CD4-positive, alpha-beta memory T cell (primary cell): ENCODE measurements at regions of chr18 and their contacts with region 1.

Region 1: DNA sequence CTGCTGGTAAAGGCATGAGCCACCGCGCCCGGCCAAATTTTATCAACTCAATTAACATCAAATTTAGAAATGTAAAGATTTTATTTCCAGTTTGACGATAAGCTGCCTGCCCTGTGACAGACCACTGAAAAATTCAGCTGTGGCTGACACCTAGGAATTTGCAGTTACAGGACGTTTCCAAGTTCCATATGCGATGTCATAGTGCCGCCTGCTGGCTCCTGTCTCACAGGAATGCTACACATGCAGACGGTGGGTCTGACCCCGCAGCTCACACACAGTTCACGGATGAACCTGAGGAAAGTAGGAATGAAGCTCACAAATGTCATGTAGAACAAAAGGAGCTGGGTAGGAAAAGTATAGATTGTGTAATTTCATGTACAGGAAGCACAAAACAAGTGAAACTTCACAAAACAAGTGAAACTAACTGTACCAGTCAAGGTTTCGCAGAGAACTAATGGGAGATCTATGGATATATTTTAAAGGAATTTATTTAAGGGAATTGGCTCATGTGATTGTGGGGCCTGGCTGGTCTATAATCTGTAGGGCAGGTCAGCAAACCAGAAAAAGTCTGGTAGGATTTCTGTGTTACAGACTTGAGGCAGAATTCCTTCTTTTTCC is 13.2 kb upstream of the SEH1L start:
- DNase-seq: peak; percentile 71 to 76 (median 73)
- H3K4me3 ChIP-seq: no peak overlapping the region
- H3K4me3 Mint-ChIP-seq: peak overlapping the region in 2 of 8 donors; percentile 6 to 59
- H3K27ac ChIP-seq: no peak overlapping the region
- H3K27ac Mint-ChIP-seq: peak overlapping the region in 1 of 7 donors; percentile 32
- H3K4me1 ChIP-seq: peaks cover 5% of the 10 kb centered on the region
- H3K4me1 Mint-ChIP-seq: peaks cover 0 to 7% (median 4%) of the 10 kb centered on the region in 4 donors
- H3K27me3 ChIP-seq: no peaks in the 10 kb centered on the region
- H3K27me3 Mint-ChIP-seq: peaks cover 2 to 3% of the 10 kb centered on the region in 2 donors

Region 2: DNA sequence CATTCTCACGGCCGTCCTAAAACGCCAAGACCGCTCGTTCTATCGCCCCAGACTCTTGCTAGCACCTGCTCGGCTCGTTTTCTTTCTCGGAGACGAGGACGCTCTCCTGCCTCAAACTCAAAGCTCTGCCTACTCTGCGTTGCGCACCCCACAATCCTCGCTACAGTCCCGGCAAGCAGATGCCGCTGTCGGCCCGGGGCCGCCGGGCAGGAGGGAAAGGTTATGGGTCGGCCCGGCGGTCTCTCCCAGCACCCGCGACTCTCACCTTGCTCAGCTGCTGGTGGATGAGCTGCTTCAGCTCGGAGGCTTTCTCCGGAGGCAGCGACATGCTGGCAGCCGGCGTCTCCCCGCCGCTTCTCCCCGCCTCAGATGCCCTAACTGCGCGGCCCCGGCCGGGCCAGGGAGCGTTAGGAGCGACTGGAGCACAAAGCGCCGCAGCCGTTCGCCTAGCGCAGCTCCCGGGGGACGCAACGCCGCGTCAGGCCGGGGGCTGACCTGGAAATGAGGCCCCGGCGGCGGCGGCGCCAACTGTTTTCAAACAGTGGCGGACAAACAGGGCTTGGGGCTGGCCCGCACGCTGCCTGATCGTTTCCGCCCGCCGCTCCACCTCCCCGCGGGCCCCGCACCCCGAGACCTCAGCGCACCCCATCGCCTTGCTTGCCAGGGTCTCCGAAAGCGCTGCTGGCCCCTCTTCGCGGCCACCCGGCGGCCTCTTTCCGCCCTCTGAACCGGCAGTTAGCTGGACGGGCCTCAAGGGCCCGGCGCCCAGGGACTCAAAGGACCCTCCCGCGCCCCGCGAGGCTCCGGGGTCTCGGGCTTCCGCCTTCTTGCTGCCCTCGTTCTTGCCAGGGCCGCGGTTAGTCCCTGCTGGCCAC is 232.1 kb before region 1 on chr18 and contains the starts of genes CEP76 and PSMG2:
- CTCF ChIA-PET with region 1: interaction called, 12 read pairs
- POLR2A ChIA-PET with region 1: interaction called, 5 read pairs
- intact Hi-C with region 1: no loop called
- DNase-seq: peak; percentile 84 to 90 (median 87)
- H3K4me3 ChIP-seq: peak within 1 kb of the TSS; percentile 82 to 99
- H3K4me3 Mint-ChIP-seq: peak within 1 kb of the TSS; percentile 87 to 100 (median 98)
- H3K27ac ChIP-seq: peak within 1 kb of the TSS; percentile 93
- H3K27ac Mint-ChIP-seq: peak within 1 kb of the TSS; percentile 89 to 100 (median 96)
- H3K4me1 ChIP-seq: peaks cover 46% of the 10 kb centered on the region
- H3K4me1 Mint-ChIP-seq: peaks cover 32 to 60% (median 48%) of the 10 kb centered on the region in 4 donors
- H3K27me3 ChIP-seq: no peaks in the 10 kb centered on the region
- H3K27me3 Mint-ChIP-seq: no peaks in the 10 kb centered on the region
- total RNA-seq, gene CEP76: 9.9 to 13.1 TPM
- total RNA-seq, gene PSMG2: 59.7 to 62.0 TPM

Region 3: GRCh38 chr18:12737243-12737902 is 197.2 kb before region 1 on chr18:
- CTCF ChIA-PET with region 1: interaction called, 221 read pairs
- POLR2A ChIA-PET with region 1: no interaction called
- intact Hi-C with region 1: no loop called
- DNase-seq: no peak
- H3K4me3 ChIP-seq: no peak overlapping the region
- H3K4me3 Mint-ChIP-seq: no peak overlapping the region
- H3K27ac ChIP-seq: no peak overlapping the region
- H3K27ac Mint-ChIP-seq: no peak overlapping the region
- H3K4me1 ChIP-seq: no peaks in the 10 kb centered on the region
- H3K4me1 Mint-ChIP-seq: no peaks in the 10 kb centered on the region
- H3K27me3 ChIP-seq: no peaks in the 10 kb centered on the region
- H3K27me3 Mint-ChIP-seq: no peaks in the 10 kb centered on the region

Region 4: GRCh38 chr18:12862467-12862866 is 72.1 kb before region 1 on chr18:
- CTCF ChIA-PET with region 1: interaction called, 12 read pairs
- POLR2A ChIA-PET with region 1: no interaction called
- intact Hi-C with region 1: no loop called
- DNase-seq: no peak
- H3K4me3 ChIP-seq: no peak overlapping the region
- H3K4me3 Mint-ChIP-seq: peak overlapping the region in 1 of 8 donors; percentile 39
- H3K27ac ChIP-seq: no peak overlapping the region
- H3K27ac Mint-ChIP-seq: peak overlapping the region in 5 of 7 donors; percentile 19 to 86 (median 75)
- H3K4me1 ChIP-seq: peaks cover 54% of the 10 kb centered on the region
- H3K4me1 Mint-ChIP-seq: peaks cover 36 to 68% (median 53%) of the 10 kb centered on the region in 4 donors
- H3K27me3 ChIP-seq: no peaks in the 10 kb centered on the region
- H3K27me3 Mint-ChIP-seq: no peaks in the 10 kb centered on the region

Region 5: GRCh38 chr18:12890506-12890905 is 44.1 kb before region 1 on chr18:
- CTCF ChIA-PET with region 1: interaction called, 69 read pairs
- POLR2A ChIA-PET with region 1: interaction called, 8 read pairs
- intact Hi-C with region 1: loop called (anchors 1 kb)
- DNase-seq: no peak
- H3K4me3 ChIP-seq: no peak overlapping the region
- H3K4me3 Mint-ChIP-seq: no peak overlapping the region
- H3K27ac ChIP-seq: no peak overlapping the region
- H3K27ac Mint-ChIP-seq: no peak overlapping the region
- H3K4me1 ChIP-seq: peaks cover 5% of the 10 kb centered on the region
- H3K4me1 Mint-ChIP-seq: peaks cover 3 to 9% (median 8%) of the 10 kb centered on the region in 4 donors
- H3K27me3 ChIP-seq: peaks cover 1% of the 10 kb centered on the region
- H3K27me3 Mint-ChIP-seq: peaks cover 7% of the 10 kb centered on the region in 2 donors

Region 6: DNA sequence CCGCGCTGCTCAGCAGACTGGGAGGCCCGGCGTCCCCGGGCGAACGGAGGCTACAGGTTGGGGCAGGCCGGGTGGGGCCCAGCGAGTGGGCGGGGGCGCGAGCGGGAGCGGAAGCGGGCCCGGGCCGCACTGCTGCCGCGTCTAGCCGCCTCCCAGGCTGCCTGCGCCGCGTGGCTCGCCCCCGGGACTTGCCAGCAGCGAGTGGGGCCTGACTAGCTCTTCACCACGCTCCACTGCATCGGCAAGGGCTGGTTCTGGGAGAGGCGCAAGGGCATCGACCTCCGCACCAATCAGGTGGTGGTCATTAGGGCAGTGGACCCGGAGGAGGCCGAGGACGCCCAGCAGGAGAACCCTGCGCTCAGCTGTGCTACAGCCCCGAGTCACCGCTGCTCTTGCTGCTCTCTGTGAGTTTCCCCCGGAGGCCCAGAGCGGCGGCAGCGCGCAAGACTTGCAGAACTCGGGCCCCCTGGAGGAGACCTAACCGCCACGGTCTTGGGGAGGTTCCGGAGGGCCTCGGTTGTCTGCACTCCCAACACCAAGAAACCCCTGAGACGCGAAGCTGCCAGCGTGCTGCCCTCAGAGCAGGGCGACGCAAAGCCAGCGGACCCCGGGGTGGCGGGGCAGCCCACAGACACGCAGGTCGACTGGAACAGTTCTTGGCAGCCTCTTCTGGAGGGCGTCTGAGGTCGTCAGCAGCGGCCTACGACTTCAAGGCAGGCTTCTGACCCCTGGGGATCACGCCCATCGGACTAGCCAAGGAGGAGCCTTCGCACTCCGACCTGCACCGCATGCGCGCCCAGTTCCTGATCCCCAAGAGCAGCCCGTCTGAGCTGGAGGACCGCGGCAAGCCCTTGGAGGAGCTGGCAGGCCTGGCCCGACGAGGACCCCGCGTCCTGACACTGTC is 23.3 kb before region 1 on chr18:
- CTCF ChIA-PET with region 1: interaction called, 40 read pairs
- POLR2A ChIA-PET with region 1: interaction called, 5 read pairs
- intact Hi-C with region 1: no loop called
- DNase-seq: peak in 4 of 5 donors; percentile 45 to 52 (median 50)
- H3K4me3 ChIP-seq: peak overlapping the region in 1 of 2 donors; percentile 43
- H3K4me3 Mint-ChIP-seq: peak overlapping the region; percentile 32 to 77 (median 69)
- H3K27ac ChIP-seq: no peak overlapping the region
- H3K27ac Mint-ChIP-seq: peak overlapping the region in 3 of 7 donors; percentile 8 to 47 (median 8)
- H3K4me1 ChIP-seq: peaks cover 12% of the 10 kb centered on the region
- H3K4me1 Mint-ChIP-seq: peaks cover 2 to 8% (median 4%) of the 10 kb centered on the region in 4 donors
- H3K27me3 ChIP-seq: no peaks in the 10 kb centered on the region
- H3K27me3 Mint-ChIP-seq: no peaks in the 10 kb centered on the region

Region 7: GRCh38 chr18:12947355-12948041 is 12.9 kb after region 1 on chr18 and contains the start of gene SEH1L:
- CTCF ChIA-PET with region 1: interaction called, 28 read pairs
- POLR2A ChIA-PET with region 1: no interaction called
- intact Hi-C with region 1: no loop called
- DNase-seq: peak; percentile 97 to 98 (median 98)
- H3K4me3 ChIP-seq: peak within 1 kb of the TSS; percentile 79 to 89
- H3K4me3 Mint-ChIP-seq: peak within 1 kb of the TSS; percentile 92 to 98 (median 96)
- H3K27ac ChIP-seq: peak within 1 kb of the TSS; percentile 90
- H3K27ac Mint-ChIP-seq: peak within 1 kb of the TSS; percentile 86 to 99 (median 98)
- H3K4me1 ChIP-seq: peaks cover 36% of the 10 kb centered on the region
- H3K4me1 Mint-ChIP-seq: peaks cover 20 to 40% (median 31%) of the 10 kb centered on the region in 4 donors
- H3K27me3 ChIP-seq: no peaks in the 10 kb centered on the region
- H3K27me3 Mint-ChIP-seq: no peaks in the 10 kb centered on the region
- total RNA-seq, gene SEH1L: 28.9 to 31.3 TPM